Breast epithelium (tissue), 4 donors: ENCODE measurements at regions of chr1 and their contacts with region 1.

Region 1: DNA sequence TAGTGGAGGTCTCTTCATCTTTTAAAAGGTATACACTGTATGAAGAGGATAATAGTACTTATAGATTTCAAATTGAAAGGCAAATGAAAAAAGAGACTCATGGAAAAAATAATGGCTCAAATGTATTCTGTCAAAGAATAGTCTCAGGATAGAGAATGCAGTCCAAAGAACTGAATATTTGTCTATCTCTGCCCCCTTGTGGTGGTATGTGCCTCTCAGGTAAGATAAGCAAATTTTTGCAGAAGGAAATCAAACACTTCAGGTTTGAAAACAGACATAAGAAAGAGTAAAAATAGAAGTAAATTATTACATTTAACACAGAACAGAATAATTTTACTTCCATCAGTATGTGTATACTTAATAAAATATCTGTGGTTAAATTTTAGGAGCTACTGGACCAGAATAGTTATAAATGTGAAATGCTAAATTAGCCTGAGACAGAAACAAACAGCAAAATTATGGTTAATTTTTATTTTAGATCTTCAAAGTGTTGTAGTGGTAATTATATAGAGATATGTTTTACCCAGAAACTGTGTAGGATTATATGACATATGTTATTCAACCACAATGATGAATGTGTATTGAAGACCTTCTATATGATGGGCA is 164.4 kb upstream of the PALMD start:
- DNase-seq: no peak
- H3K4me3 ChIP-seq: no peak overlapping the region
- H3K27ac ChIP-seq: no peak overlapping the region
- H3K4me1 ChIP-seq: no peaks in the 10 kb centered on the region
- H3K27me3 ChIP-seq: no peaks in the 10 kb centered on the region
- CTCF ChIP-seq: peak; percentile 66 to 81 (median 67)
- POLR2A ChIP-seq: no peak

Region 2: GRCh38 chr1:99170516-99170915 is 311.0 kb before region 1 on chr1:
- intact Hi-C with region 1: loop called (anchors 10 kb)
- DNase-seq: no peak
- H3K4me3 ChIP-seq: no peak overlapping the region
- H3K27ac ChIP-seq: no peak overlapping the region
- H3K4me1 ChIP-seq: no peaks in the 10 kb centered on the region
- H3K27me3 ChIP-seq: no peaks in the 10 kb centered on the region
- CTCF ChIP-seq: no peak
- POLR2A ChIP-seq: no peak